Posterior cingulate gyrus (tissue), 11 donors: ENCODE measurements at regions of chr1 and their contacts with region 1.

Region 1: DNA sequence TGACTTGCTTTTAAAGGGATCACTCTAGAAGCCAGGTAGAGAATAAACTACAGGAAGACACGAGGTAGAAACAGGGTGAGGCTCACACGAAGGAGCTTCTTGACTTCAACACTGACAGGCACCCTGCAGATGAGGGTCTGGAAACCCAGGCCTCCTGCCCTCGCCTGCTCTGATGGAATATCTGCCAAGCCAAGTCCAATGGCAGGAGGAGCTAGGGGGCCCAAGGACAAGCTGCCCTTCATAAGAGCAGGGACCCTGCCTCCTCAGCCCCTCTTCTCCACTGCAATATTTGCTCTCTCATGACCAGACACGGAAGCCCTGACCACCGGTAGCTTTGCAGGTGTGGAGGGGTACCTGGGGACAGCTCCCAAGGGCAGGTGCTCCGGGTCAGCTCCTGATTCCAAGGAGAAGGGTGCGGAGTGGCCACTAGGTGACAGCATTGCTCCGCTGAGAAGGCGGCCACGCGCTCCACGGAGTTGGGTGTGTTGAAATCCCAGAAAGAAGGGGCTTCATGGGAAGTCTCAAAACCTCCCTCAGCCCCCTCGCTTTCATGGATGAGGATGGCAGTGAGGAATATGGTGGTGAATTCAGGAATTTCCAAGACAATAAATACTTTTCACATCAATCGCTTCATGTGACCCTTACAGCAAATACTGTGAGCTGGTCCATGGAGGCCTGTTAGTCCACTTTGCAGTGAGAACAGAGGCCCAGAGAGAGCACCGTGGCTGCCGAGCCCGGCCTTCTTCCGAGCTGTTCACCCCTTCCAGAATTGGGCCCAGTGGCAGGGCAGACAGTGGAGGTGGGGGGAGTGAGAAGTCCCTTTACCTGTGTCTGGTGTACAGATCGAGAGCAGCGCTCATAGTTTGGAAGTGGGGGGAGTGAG is 33.2 kb upstream of the PAX7 start:
- DNase-seq: peak; percentile 40 to 95 (median 68)

Region 2: GRCh38 chr1:18234790-18235242 is 362.6 kb before region 1 on chr1:
- intact Hi-C with region 1: no loop called
- DNase-seq: peak in 5 of 10 donors; percentile 37 to 85 (median 51)

Region 3: DNA sequence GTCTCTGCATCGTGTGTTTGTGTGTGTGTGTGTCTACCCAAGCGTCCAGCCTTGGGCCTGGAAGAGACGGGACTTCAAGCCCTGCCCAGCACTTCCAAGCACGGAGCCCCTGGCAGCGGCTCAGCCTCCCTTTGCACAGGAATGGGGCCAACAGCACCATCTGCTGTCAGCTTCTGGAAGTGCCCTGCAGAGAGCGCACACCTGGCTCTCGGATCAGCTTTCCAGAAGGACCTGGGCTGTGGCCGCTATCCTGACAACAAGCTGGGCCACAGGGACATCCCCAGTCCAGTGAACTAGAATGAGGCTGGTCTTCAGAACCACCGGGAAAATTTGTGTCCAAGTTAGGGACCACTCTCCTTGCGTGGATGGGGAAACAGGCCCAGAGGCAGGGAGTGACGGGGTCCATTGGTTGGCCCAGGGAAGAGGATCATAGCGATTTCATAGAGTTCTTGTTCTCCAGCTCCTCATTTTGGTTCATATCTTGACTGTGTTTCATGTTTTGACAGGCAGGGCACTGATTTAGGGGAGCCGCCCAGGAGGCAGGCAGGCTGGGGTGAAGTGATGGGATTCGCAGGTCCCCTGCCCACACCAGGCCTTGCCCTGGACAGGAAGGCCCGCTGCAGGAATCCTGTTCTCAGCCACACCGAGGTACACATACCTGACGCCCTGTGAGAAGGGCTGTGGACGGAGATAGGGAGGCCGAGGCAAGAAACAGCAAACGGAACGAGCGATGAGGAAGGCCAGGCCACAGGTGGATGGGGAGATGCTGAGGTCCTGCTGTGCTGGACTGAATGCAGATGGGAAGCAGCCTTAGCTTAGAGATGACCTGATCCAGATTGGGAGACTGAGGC is 223.6 kb after region 1 on chr1:
- intact Hi-C with region 1: loop called (anchors 1 kb)
- DNase-seq: peak; percentile 40 to 95 (median 76)

Region 4: DNA sequence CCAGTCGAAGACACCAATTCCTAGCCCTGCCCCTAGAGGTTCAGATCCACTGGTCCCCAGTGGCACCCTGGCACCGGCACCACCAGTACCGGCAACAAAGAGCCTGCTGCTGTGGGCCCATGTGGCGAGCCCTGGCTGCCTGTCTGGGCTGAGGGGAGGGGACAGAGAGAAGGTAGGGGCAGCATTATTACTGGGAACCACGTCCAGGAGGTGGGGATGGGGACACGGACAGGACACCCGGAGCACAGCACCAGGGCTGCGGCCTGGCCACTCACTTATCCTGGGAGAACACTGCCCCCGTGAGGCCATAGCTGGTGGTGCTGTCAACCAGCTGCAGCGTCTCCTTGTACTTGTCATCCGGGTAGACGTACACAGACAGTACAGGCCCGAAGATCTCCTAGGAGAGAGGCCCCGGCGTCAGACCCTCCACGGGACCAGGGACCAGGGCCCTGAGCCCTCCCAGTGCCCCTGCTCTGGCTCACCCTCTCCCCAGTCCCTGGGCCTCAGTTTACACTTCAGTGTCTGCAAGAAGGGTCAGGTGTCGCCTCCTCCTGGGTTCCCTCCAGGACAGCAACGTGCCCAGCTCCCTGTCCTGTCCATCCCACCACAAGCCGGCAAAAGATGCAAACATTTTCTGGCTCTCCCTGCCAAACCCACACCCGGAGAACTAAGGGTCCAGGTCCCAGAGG is 277.9 kb after region 1 on chr1:
- intact Hi-C with region 1: loop called (anchors 1 kb)
- DNase-seq: peak; percentile 72 to 98 (median 90)